ENCODE measurements at regions of chr13 and their contacts with region 1.

Region 1: GRCh38 chr13:51814825-51815650 is 11.1 kb upstream of the DHRS12 start:
- DNase-seq: peak; percentile 74 to 79 (median 77)
- H3K4me3 ChIP-seq: peak overlapping the region in 1 of 2 donors; percentile 12
- H3K4me3 Mint-ChIP-seq: peak overlapping the region; percentile 52 to 83 (median 70)
- H3K27ac ChIP-seq: peak overlapping the region; percentile 43
- H3K27ac Mint-ChIP-seq: peak overlapping the region; percentile 78 to 97 (median 90)
- H3K4me1 ChIP-seq: peaks cover 62% of the 10 kb centered on the region
- H3K4me1 Mint-ChIP-seq: peaks cover 47 to 85% (median 64%) of the 10 kb centered on the region in 4 donors
- H3K27me3 ChIP-seq: no peaks in the 10 kb centered on the region
- H3K27me3 Mint-ChIP-seq: no peaks in the 10 kb centered on the region

Region 2: DNA sequence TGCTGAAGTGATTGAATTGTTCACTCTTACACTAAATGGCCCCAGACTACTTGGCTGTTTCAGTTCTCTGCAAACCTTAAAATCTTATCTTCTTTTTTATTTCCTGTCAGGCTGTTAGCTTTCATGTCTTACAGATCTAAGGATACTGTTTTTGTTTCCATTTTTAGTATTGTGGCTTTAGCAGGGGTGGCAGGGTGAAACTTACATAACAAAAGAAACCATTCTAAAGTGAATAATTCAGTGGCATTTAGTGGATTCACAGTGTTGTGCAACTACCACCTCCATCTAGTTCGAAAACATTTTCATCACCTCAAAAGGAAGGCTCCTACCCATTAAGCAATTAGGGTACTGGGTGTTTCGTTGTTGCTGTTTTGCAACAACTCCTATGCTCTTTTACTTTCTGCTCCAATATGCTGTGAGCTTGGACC is 10.1 kb after region 1 on chr13:
- CTCF ChIA-PET with region 1: interaction called, 232 read pairs
- POLR2A ChIA-PET with region 1: interaction called, 288 read pairs
- intact Hi-C with region 1: loop called (anchors 1 kb)
- DNase-seq: peak; percentile 57 to 84 (median 79)
- H3K4me3 ChIP-seq: peak overlapping the region; percentile 31 to 56
- H3K4me3 Mint-ChIP-seq: peak overlapping the region; percentile 86 to 95 (median 90)
- H3K27ac ChIP-seq: peak overlapping the region; percentile 65
- H3K27ac Mint-ChIP-seq: peak overlapping the region; percentile 88 to 95 (median 94)
- H3K4me1 ChIP-seq: peaks cover 81% of the 10 kb centered on the region
- H3K4me1 Mint-ChIP-seq: peaks cover 56 to 99% (median 77%) of the 10 kb centered on the region in 4 donors
- H3K27me3 ChIP-seq: no peaks in the 10 kb centered on the region
- H3K27me3 Mint-ChIP-seq: no peaks in the 10 kb centered on the region

Region 3: GRCh38 chr13:51844862-51845573 is 30.0 kb after region 1 on chr13 and contains the start of gene TMEM272:
- CTCF ChIA-PET with region 1: interaction called, 71 read pairs
- POLR2A ChIA-PET with region 1: no interaction called
- intact Hi-C with region 1: no loop called
- DNase-seq: peak in 4 of 5 donors; percentile 36 to 57 (median 48)
- H3K4me3 ChIP-seq: no peak within 1 kb of the TSS
- H3K4me3 Mint-ChIP-seq: peak within 1 kb of the TSS in 4 of 8 donors; percentile 9 to 70 (median 54)
- H3K27ac ChIP-seq: no peak within 1 kb of the TSS
- H3K27ac Mint-ChIP-seq: peak within 1 kb of the TSS in 2 of 7 donors; percentile 48 to 62
- H3K4me1 ChIP-seq: no peaks in the 10 kb centered on the region
- H3K4me1 Mint-ChIP-seq: peaks cover 4 to 10% (median 8%) of the 10 kb centered on the region in 4 donors
- H3K27me3 ChIP-seq: no peaks in the 10 kb centered on the region
- H3K27me3 Mint-ChIP-seq: peaks cover 2 to 3% of the 10 kb centered on the region in 2 donors
- total RNA-seq, gene TMEM272: 7.9 to 9.0 TPM